ENCODE measurements at regions of chr4 and their contacts with region 1.

Region 1: GRCh38 chr4:20422398-20422797 is 170.7 kb downstream of the SLIT2 start:
- H3K4me3 Mint-ChIP-seq: no peak overlapping the region
- H3K27ac Mint-ChIP-seq: no peak overlapping the region
- H3K4me1 Mint-ChIP-seq: no peaks in the 10 kb centered on the region
- H3K27me3 Mint-ChIP-seq: no peaks in the 10 kb centered on the region

Region 2: GRCh38 chr4:20684852-20685763 is 262.7 kb after region 1 on chr4:
- intact Hi-C with region 1: loop called (anchors 1 kb)
- H3K4me3 Mint-ChIP-seq: no peak overlapping the region
- H3K27ac Mint-ChIP-seq: no peak overlapping the region
- H3K4me1 Mint-ChIP-seq: no peaks in the 10 kb centered on the region
- H3K27me3 Mint-ChIP-seq: peaks cover 9% of the 10 kb centered on the region

Region 3: GRCh38 chr4:21765810-21766407 is 1343.5 kb after region 1 on chr4:
- intact Hi-C with region 1: loop called (anchors 5 kb)
- H3K4me3 Mint-ChIP-seq: no peak overlapping the region
- H3K27ac Mint-ChIP-seq: no peak overlapping the region
- H3K4me1 Mint-ChIP-seq: no peaks in the 10 kb centered on the region
- H3K27me3 Mint-ChIP-seq: peaks cover 5% of the 10 kb centered on the region

Measured in dendritic cell treated with granulocyte-macrophage colony-stimulating factor and Interleukin-4, amounts not matched to agents 40 ng/mL and 50 ng/mL, for 4 days (primary cell).